ENCODE measurements at regions of chr11 and their contacts with region 1.

Region 1: DNA sequence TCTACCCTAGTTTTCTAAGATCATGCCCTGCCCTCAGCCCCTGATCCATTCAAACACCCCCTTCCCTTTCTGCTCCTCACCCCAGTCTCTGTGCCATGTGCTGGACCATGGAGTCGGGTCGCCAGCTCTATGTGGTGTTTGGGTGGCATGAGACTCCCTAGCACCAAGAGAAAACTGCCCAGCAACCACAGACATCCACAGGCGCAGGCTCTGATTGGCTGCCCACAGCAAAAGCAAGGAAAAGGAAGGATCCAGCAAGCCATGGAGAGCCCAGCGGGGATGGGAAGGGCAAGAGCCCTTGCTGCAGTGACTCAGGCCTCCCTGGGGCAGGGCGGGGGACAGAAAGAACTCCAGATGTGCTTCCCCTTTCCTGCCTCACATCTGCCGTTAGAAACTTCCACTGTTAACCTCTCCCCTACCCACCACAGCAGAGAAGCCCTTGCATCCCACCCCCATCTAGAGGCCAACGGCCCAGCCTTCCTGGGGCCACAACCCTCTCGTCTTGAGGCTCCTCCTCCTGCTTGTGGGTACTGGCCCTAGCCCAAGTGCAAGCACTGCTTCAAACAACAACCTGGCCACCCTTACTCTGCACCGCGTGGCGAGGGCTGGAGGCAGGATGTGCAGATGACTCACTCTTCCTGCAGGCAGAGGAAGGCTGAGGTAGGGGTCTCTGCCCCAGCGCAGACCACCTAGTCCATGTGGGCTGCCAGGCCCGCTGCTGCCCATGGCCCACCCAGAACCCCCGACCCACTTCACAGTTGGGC is 9.7 kb upstream of the AHNAK start:
- DNase-seq: peak; percentile 90 to 94
- H3K4me3 ChIP-seq: peak overlapping the region; percentile 38; the same call in 1 of the 2 replicates
- H3K27ac ChIP-seq: peak overlapping the region; percentile 92
- H3K4me1 ChIP-seq: peaks cover 96% of the 10 kb centered on the region
- H3K27me3 ChIP-seq: no peaks in the 10 kb centered on the region
- CTCF ChIP-seq: no peak

Region 2: DNA sequence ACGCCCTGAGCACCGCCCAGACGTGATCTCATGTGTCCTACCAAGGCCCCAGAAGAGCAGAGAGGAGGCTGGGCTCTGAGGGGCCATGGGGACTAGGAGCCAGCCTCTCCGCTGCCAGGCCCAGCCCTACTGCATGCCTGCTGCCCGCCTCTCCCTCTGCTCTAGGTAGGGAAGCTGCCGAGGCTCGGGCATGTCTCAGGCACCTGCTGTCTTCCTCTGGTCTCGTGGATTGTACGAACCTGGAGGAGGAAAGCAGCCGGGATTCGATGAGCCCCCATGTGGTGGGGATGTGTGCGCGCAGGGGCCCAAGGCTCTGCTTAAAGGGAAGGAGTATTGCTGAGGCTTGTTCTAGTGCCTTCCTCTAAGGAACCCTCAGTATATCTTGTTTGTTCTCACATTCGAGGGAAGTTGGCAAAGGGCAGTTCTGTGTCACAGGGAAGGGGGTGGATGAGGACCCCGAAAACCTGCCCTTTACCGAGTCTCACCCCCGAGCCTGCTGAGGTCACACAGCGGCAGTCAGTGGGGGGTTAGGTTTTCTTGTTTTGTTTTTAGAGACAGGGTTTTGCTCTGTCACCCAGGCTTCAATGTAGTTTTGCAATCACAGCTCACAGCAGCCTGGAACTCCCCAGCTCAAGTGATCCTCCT is 854.9 kb before region 1 on chr11:
- CTCF ChIA-PET with region 1: no interaction called
- POLR2A ChIA-PET with region 1: no interaction called
- intact Hi-C with region 1: no loop called
- DNase-seq: no peak
- H3K4me3 ChIP-seq: no peak overlapping the region
- H3K27ac ChIP-seq: peak overlapping the region; percentile 96; the same call in 1 of the 2 replicates
- H3K4me1 ChIP-seq: peaks cover 56% of the 10 kb centered on the region
- H3K27me3 ChIP-seq: no peaks in the 10 kb centered on the region
- CTCF ChIP-seq: peak; percentile 38; the same call in 1 of the 2 replicates

Region 3: DNA sequence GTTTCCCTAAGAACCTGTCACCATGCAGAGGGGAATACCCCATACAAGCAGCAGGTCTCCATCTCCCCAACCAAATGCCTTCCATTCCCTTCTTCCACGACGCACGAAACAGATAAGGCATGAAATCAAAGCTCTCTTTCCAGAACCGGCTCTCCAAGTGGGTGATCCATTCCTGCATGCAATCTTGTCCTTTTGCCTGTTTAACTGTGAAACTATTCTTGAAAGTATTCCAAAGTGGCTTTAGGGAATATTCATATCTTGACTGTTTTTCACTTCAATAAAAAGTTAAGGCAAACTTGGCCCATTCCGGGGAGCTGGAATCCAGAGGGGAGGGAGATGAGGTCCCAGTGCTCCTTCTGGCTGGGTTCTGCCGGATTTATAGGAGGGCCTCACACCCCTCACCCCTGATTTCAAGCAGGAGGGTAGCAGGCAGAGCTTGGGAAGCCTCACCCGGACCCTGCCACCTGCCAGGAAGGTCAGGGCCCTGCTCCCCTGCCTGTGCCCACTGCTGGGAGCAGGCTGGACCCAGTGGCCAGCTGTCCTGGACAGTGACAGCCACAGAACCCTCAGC is 76.6 kb before region 1 on chr11:
- CTCF ChIA-PET with region 1: interaction called, 22 read pairs
- POLR2A ChIA-PET with region 1: interaction called, 32 read pairs
- intact Hi-C with region 1: no loop called
- DNase-seq: no peak
- H3K4me3 ChIP-seq: peak overlapping the region; percentile 36; the same call in 1 of the 2 replicates
- H3K27ac ChIP-seq: peak overlapping the region; percentile 95
- H3K4me1 ChIP-seq: peaks cover 42% of the 10 kb centered on the region
- H3K27me3 ChIP-seq: no peaks in the 10 kb centered on the region
- CTCF ChIP-seq: no peak

Region 4: GRCh38 chr11:62508268-62509058 is 47.8 kb before region 1 on chr11:
- CTCF ChIA-PET with region 1: interaction called, 15 read pairs
- POLR2A ChIA-PET with region 1: interaction called, 4 read pairs
- intact Hi-C with region 1: loop called (anchors 1 kb)
- DNase-seq: peak; percentile 86 to 92
- H3K4me3 ChIP-seq: peak overlapping the region; percentile 19; the same call in 1 of the 2 replicates
- H3K27ac ChIP-seq: peak overlapping the region; percentile 63
- H3K4me1 ChIP-seq: peaks cover 46% of the 10 kb centered on the region
- H3K27me3 ChIP-seq: no peaks in the 10 kb centered on the region
- CTCF ChIP-seq: peak; percentile 57; the same call in 1 of the 2 replicates

Region 5: DNA sequence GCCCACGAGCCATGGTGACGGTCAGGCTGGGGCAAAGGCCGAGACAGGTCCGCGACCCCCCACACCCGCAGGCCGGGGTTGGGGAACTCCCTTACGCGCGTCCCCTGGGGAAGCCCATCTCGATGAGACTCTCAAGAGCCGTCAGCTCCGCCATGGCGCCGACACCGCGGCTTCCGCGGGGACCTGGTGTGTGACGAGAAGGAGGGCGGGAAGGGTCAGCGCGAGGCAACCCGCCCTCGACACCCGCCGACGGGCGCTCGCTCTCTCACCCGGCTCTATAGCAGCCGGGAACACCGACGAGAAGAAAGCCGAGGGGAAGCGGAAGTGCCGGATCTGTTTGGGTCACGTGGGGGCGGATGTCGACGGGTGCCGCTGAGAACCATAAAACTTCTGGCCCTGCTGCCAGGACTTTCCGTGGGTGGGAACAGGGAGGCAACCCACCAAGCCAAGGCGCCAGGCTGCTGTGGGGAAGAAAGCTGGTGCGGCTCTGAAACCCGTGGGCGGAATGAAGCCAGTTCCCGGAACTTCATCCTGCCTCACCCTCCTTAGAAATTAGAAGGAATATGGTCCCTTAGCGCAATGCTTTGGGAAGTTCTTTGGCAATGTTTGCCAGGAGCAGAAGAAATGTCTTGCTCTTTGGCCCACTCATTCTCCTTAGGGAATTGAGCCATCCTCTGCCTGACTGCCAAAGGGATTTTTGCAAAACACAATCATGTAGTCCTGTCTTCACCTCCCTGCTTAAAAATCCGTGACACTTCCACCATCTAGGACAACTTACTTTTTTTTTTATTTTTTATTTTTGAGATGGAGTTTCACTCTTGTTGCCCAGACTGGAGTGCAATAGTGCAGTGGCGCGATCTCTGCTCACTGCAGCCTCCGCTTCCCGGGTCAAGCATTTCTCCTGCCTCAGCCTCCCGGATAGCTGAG is 122.7 kb after region 1 on chr11 and contains the start of gene UBXN1:
- CTCF ChIA-PET with region 1: interaction called, 10 read pairs
- POLR2A ChIA-PET with region 1: no interaction called
- intact Hi-C with region 1: no loop called
- DNase-seq: peak; percentile 78 to 80
- H3K4me3 ChIP-seq: peak within 1 kb of the TSS; percentile 76
- H3K27ac ChIP-seq: peak within 1 kb of the TSS; percentile 37
- H3K4me1 ChIP-seq: peaks cover 29% of the 10 kb centered on the region
- H3K27me3 ChIP-seq: no peaks in the 10 kb centered on the region
- CTCF ChIP-seq: no peak
- total RNA-seq, gene UBXN1: 143 and 150 TPM in 2 replicates

Measured in PC-9 (cell line).